Ovary (tissue), 10 donors: ENCODE measurements at regions of chr1 and their contacts with region 1.

Region 1: DNA sequence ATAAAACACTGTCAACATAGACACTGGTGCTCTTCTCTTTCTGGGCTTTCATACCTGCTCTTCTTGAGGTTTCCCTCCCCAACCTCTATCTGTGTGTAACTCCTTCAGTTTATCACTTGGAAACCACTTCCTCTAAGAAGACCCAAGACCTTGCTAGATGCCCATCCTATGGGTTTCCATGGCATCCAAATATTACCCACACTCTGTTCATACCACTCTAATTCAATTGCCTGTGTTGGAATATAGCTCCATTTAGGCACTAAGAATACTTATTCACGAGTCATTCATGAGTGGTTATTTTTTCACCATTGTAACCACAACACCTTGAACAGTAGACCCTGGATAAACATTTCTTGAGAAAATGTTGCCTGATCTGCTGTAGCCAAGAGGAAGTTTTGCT is 231.1 kb upstream of the SGIP1 start:
- DNase-seq: no peak
- H3K4me3 ChIP-seq: no peak overlapping the region
- H3K27ac ChIP-seq: no peak overlapping the region
- H3K4me1 ChIP-seq: no peaks in the 10 kb centered on the region
- H3K27me3 ChIP-seq: no peaks in the 10 kb centered on the region
- CTCF ChIP-seq: no peak
- EP300 ChIP-seq: no peak
- POLR2A ChIP-seq: no peak

Region 2: GRCh38 chr1:65979136-65980044 is 323.4 kb before region 1 on chr1:
- intact Hi-C with region 1: no loop called
- DNase-seq: no peak
- H3K4me3 ChIP-seq: no peak overlapping the region
- H3K27ac ChIP-seq: no peak overlapping the region
- H3K4me1 ChIP-seq: no peaks in the 10 kb centered on the region
- H3K27me3 ChIP-seq: no peaks in the 10 kb centered on the region
- CTCF ChIP-seq: no peak
- EP300 ChIP-seq: no peak
- POLR2A ChIP-seq: no peak

Region 3: GRCh38 chr1:66291047-66291868 is 11.6 kb before region 1 on chr1:
- intact Hi-C with region 1: loop called in 1 of 4 experiments (anchors 1 kb)
- DNase-seq: no peak
- H3K4me3 ChIP-seq: no peak overlapping the region
- H3K27ac ChIP-seq: no peak overlapping the region
- H3K4me1 ChIP-seq: no peaks in the 10 kb centered on the region
- H3K27me3 ChIP-seq: no peaks in the 10 kb centered on the region
- CTCF ChIP-seq: no peak
- EP300 ChIP-seq: no peak
- POLR2A ChIP-seq: no peak